Caco-2 (cell line): ENCODE measurements at regions of chr6 and their contacts with region 1.

Region 1: GRCh38 chr6:17494177-17494576 is 100.8 kb downstream of the CAP2 start:
- DNase-seq: no peak
- H3K4me3 ChIP-seq: no peak overlapping the region
- H3K4me3 Mint-ChIP-seq: no peak overlapping the region
- H3K27ac Mint-ChIP-seq: no peak overlapping the region
- H3K4me1 ChIP-seq: no peaks in the 10 kb centered on the region
- H3K4me1 Mint-ChIP-seq: no peaks in the 10 kb centered on the region
- H3K27me3 ChIP-seq: no peaks in the 10 kb centered on the region
- H3K27me3 Mint-ChIP-seq: no peaks in the 10 kb centered on the region
- CTCF ChIP-seq: no peak

Region 2: GRCh38 chr6:17392978-17393891 is 100.9 kb before region 1 on chr6 and contains the start of gene CAP2:
- CTCF ChIA-PET with region 1: no interaction called
- POLR2A ChIA-PET with region 1: interaction called, 10 read pairs
- intact Hi-C with region 1: no loop called
- DNase-seq: peak; percentile 65 to 70
- H3K4me3 ChIP-seq: peak within 1 kb of the TSS; percentile 89
- H3K4me3 Mint-ChIP-seq: peak within 1 kb of the TSS; percentile 81
- H3K27ac Mint-ChIP-seq: peak within 1 kb of the TSS; percentile 96
- H3K4me1 ChIP-seq: peaks cover 10% of the 10 kb centered on the region
- H3K4me1 Mint-ChIP-seq: peaks cover 7% of the 10 kb centered on the region
- H3K27me3 ChIP-seq: no peaks in the 10 kb centered on the region
- H3K27me3 Mint-ChIP-seq: no peaks in the 10 kb centered on the region
- CTCF ChIP-seq: no peak
- total RNA-seq, gene CAP2: 8.5 and 8.9 TPM in 2 replicates